T-cell (primary cell): ENCODE measurements at regions of chr3 and their contacts with region 1.

Region 1: DNA sequence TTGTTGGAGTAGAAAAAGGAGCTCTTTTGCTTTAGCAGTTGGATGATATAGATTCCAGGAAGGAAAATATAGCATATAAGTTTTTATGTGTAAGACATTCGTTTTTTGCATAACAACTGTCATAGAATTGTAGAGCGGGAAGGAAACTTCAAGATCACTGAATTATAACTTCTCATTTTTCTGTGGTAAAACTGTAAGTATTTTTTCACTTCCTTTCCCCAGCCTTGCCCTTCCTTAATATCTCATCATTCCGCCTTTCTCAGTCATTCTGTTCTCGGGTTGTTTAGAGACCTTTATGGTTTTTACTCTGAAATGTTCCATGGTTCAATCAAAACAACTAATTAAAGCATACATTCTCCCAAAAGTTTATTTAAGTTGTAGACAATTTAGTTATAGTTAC is 1.1 kb downstream of the EAF2 start:
- DNase-seq: no peak
- ATAC-seq: no peak
- H3K4me3 ChIP-seq: peak overlapping the region in 1 of 2 donors; percentile 88
- H3K4me3 Mint-ChIP-seq: peak overlapping the region; percentile 90 to 98 (median 95)
- H3K27ac ChIP-seq: no peak overlapping the region
- H3K27ac Mint-ChIP-seq: peak overlapping the region; percentile 41 to 63
- H3K4me1 ChIP-seq: peaks cover 16 to 20% of the 10 kb centered on the region in 2 experiments
- H3K4me1 Mint-ChIP-seq: peaks cover 46 to 51% (median 50%) of the 10 kb centered on the region in 3 donors
- H3K27me3 ChIP-seq: no peaks in the 10 kb centered on the region
- H3K27me3 Mint-ChIP-seq: no peaks in the 10 kb centered on the region

Region 2: GRCh38 chr3:121545574-121546455 is 290.2 kb before region 1 on chr3 and contains the start of gene POLQ:
- CTCF ChIA-PET with region 1: interaction called in 1 of 2 experiments, 3 read pairs
- POLR2A ChIA-PET with region 1: interaction called in 1 of 2 experiments, 14 read pairs
- DNase-seq: peak; percentile 65 to 91 (median 86)
- ATAC-seq: peak; percentile 98 to 99 (median 99)
- H3K4me3 ChIP-seq: peak within 1 kb of the TSS; percentile 63 to 95
- H3K4me3 Mint-ChIP-seq: peak within 1 kb of the TSS; percentile 88 to 93 (median 89)
- H3K27ac ChIP-seq: peak within 1 kb of the TSS; percentile 67
- H3K27ac Mint-ChIP-seq: peak within 1 kb of the TSS; percentile 91 to 93
- H3K4me1 ChIP-seq: peaks cover 6 to 9% of the 10 kb centered on the region in 2 experiments
- H3K4me1 Mint-ChIP-seq: peaks cover 10 to 21% (median 10%) of the 10 kb centered on the region in 3 donors
- H3K27me3 ChIP-seq: no peaks in the 10 kb centered on the region
- H3K27me3 Mint-ChIP-seq: no peaks in the 10 kb centered on the region
- total RNA-seq, gene POLQ: 0.23 to 1.1 (median 0.47) TPM

Region 3: GRCh38 chr3:121794264-121794983 is 41.6 kb before region 1 on chr3:
- CTCF ChIA-PET with region 1: no interaction called
- POLR2A ChIA-PET with region 1: no interaction called
- DNase-seq: no peak
- ATAC-seq: no peak
- H3K4me3 ChIP-seq: no peak overlapping the region
- H3K4me3 Mint-ChIP-seq: no peak overlapping the region
- H3K27ac ChIP-seq: no peak overlapping the region
- H3K27ac Mint-ChIP-seq: peak overlapping the region in 1 of 2 donors; percentile 22
- H3K4me1 ChIP-seq: no peaks in the 10 kb centered on the region
- H3K4me1 Mint-ChIP-seq: peaks cover 0 to 4% (median 0%) of the 10 kb centered on the region in 3 donors
- H3K27me3 ChIP-seq: no peaks in the 10 kb centered on the region
- H3K27me3 Mint-ChIP-seq: no peaks in the 10 kb centered on the region